ENCODE measurements at regions of chr20 and their contacts with region 1.

Region 1: GRCh38 chr20:62555642-62556420 is 80.0 kb upstream of the GATA5 start:
- DNase-seq: no peak

Region 2: GRCh38 chr20:62578294-62578897 is 22.6 kb after region 1 on chr20:
- intact Hi-C with region 1: loop called in 1 of 2 experiments (anchors 1 kb)
- DNase-seq: no peak

Measured in posterior vena cava (tissue), 2 donors.